PC-9 (cell line): ENCODE measurements at regions of chr6 and their contacts with region 1.

Region 1: DNA sequence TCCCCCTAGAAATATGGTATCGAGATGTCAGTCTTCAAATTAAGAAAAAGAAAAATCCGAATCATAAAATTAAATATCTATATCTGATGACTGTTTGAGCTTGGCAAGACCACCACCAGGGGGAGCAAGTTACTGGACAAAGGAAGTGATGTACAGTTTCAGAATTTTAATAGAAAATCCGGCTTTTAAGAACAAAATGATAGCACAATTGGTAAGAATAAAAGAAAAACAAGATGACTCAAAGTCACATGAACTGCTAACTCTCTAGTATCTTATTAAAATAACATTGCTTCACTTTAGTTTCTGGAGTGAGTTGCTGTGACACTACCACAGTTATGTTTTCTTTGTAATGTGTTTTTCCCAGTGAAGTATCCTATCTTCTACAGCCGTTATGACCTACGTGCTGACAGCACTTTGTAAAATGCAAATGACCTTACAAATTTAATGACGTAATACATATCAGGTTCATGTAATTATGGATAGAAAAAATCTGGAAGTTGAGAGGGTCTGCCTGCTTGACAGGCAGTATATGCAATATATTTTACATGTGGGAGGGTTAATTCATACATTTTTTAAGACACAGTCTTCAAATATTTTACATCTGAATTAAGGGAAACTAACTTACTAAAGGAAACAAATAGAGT is 405.3 kb upstream of the HS3ST5 start:
- DNase-seq: peak; percentile 41 to 43
- H3K4me3 ChIP-seq: no peak overlapping the region
- H3K27ac ChIP-seq: no peak overlapping the region
- H3K4me1 ChIP-seq: no peaks in the 10 kb centered on the region
- H3K27me3 ChIP-seq: no peaks in the 10 kb centered on the region
- CTCF ChIP-seq: peak; percentile 96

Region 2: GRCh38 chr6:113873043-113873667 is 875.0 kb before region 1 on chr6:
- CTCF ChIA-PET with region 1: no interaction called
- POLR2A ChIA-PET with region 1: no interaction called
- intact Hi-C with region 1: no loop called
- DNase-seq: no peak
- H3K4me3 ChIP-seq: no peak overlapping the region
- H3K27ac ChIP-seq: no peak overlapping the region
- H3K4me1 ChIP-seq: no peaks in the 10 kb centered on the region
- H3K27me3 ChIP-seq: no peaks in the 10 kb centered on the region
- CTCF ChIP-seq: no peak

Region 3: DNA sequence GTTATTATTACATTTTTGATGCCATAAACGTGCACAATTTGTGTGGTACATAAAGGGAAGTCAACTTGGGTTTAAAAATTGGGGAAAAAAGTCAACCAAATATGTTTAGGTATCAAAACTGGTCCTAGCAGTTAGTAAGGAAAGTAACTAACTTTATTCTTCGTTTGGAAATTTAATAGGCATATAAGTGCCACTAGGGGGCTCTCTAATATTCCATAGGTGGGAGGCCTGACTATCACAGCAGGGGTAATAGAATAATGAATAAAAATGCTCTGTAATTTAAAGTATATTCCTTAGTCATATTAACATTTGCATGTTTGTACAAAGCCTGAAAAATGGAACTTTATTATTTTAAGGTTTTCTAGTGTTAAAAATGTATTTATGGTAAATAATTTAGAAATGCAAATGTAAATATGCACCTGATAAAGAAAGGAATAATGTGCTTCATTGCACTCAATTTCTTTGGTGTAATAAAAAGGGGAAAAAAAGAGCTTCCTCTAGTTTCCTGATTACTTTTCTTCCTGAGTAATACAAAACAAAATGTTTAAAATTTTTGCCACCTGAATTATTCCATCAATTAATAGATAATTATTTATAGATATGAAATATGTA is 651.4 kb before region 1 on chr6:
- CTCF ChIA-PET with region 1: no interaction called
- POLR2A ChIA-PET with region 1: no interaction called
- intact Hi-C with region 1: loop called (anchors 5 kb)
- DNase-seq: no peak
- H3K4me3 ChIP-seq: no peak overlapping the region
- H3K27ac ChIP-seq: no peak overlapping the region
- H3K4me1 ChIP-seq: no peaks in the 10 kb centered on the region
- H3K27me3 ChIP-seq: no peaks in the 10 kb centered on the region
- CTCF ChIP-seq: peak; percentile 99

Region 4: GRCh38 chr6:115001731-115002350 is 253.7 kb after region 1 on chr6:
- CTCF ChIA-PET with region 1: no interaction called
- POLR2A ChIA-PET with region 1: no interaction called
- intact Hi-C with region 1: loop called (anchors 10 kb)
- DNase-seq: peak in 1 of 2 experiments; percentile 59
- H3K4me3 ChIP-seq: no peak overlapping the region
- H3K27ac ChIP-seq: no peak overlapping the region
- H3K4me1 ChIP-seq: peaks cover 27% of the 10 kb centered on the region
- H3K27me3 ChIP-seq: no peaks in the 10 kb centered on the region
- CTCF ChIP-seq: no peak

Region 5: GRCh38 chr6:115896538-115897129 is 1148.5 kb after region 1 on chr6:
- CTCF ChIA-PET with region 1: no interaction called
- POLR2A ChIA-PET with region 1: no interaction called
- intact Hi-C with region 1: loop called (anchors 1 kb)
- DNase-seq: no peak
- H3K4me3 ChIP-seq: no peak overlapping the region
- H3K27ac ChIP-seq: no peak overlapping the region
- H3K4me1 ChIP-seq: peaks cover 9% of the 10 kb centered on the region; the same call in 1 of the 2 replicates
- H3K27me3 ChIP-seq: no peaks in the 10 kb centered on the region
- CTCF ChIP-seq: peak; percentile 96